ENCODE measurements at regions of chr7 and their contacts with region 1.

Region 1: GRCh38 chr7:26667500-26668133 is 196.8 kb downstream of the SKAP2 start:
- DNase-seq: peak; percentile 56
- H3K4me3 ChIP-seq: no peak overlapping the region
- H3K27ac ChIP-seq: no peak overlapping the region
- H3K27me3 ChIP-seq: no peaks in the 10 kb centered on the region
- CTCF ChIP-seq: peak; percentile 92

Region 2: GRCh38 chr7:25940086-25940906 is 727.3 kb before region 1 on chr7:
- CTCF ChIA-PET with region 1: no interaction called
- POLR2A ChIA-PET with region 1: no interaction called
- DNase-seq: no peak
- H3K4me3 ChIP-seq: no peak overlapping the region
- H3K27ac ChIP-seq: no peak overlapping the region
- H3K27me3 ChIP-seq: peaks cover 3% of the 10 kb centered on the region
- CTCF ChIP-seq: no peak

Region 3: GRCh38 chr7:26182706-26183105 is 484.9 kb before region 1 on chr7:
- CTCF ChIA-PET with region 1: no interaction called
- POLR2A ChIA-PET with region 1: no interaction called
- DNase-seq: no peak
- H3K4me3 ChIP-seq: no peak overlapping the region
- H3K27ac ChIP-seq: no peak overlapping the region
- H3K27me3 ChIP-seq: no peaks in the 10 kb centered on the region
- CTCF ChIP-seq: no peak

Region 4: GRCh38 chr7:26680587-26680986 is 13.0 kb after region 1 on chr7:
- CTCF ChIA-PET with region 1: interaction called, 17 read pairs
- POLR2A ChIA-PET with region 1: no interaction called
- DNase-seq: no peak
- H3K4me3 ChIP-seq: no peak overlapping the region
- H3K27ac ChIP-seq: no peak overlapping the region
- H3K27me3 ChIP-seq: no peaks in the 10 kb centered on the region
- CTCF ChIP-seq: no peak

Region 5: DNA sequence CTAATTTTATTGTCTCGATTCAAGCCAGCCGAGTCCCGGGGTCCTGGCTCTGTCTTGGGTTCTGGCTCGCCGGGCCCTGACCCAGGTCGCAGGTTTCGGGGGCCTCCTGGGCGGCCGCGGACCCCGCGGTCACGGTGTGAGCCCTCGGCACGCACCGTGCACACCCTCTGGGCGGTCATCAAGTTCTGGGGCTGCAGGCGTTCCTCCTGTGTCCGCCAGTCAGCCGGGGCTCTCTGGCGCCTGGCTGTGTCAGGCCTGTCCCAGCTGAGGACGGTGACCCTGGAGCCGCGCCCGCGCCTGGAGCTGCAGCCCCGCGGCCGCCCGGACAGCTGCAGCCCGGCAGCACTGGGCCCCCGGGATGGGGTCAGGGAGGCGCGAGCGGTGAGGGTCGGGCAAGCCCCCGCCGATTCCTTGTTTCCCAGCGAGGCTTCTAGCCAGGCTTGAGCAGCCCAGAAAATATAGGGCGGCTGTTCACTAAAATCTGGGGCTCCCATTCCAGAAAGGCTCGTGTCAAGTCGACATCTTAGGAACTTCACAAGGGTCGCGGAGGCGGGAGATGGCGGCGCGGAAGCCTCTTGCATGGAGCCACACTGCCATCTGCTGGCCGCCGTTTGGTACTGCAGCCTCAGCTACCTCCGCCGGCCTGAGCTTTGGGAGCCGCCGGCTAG is 493.1 kb after region 1 on chr7:
- CTCF ChIA-PET with region 1: interaction called, 22 read pairs
- POLR2A ChIA-PET with region 1: no interaction called
- DNase-seq: peak; percentile 64
- H3K4me3 ChIP-seq: peak overlapping the region; percentile 62
- H3K27ac ChIP-seq: no peak overlapping the region
- H3K27me3 ChIP-seq: peaks cover 26% of the 10 kb centered on the region
- CTCF ChIP-seq: peak; percentile 96

Measured in AG04450 (cell line).